AG04449 (cell line): ENCODE measurements at regions of chr11 and their contacts with region 1.

Region 1: DNA sequence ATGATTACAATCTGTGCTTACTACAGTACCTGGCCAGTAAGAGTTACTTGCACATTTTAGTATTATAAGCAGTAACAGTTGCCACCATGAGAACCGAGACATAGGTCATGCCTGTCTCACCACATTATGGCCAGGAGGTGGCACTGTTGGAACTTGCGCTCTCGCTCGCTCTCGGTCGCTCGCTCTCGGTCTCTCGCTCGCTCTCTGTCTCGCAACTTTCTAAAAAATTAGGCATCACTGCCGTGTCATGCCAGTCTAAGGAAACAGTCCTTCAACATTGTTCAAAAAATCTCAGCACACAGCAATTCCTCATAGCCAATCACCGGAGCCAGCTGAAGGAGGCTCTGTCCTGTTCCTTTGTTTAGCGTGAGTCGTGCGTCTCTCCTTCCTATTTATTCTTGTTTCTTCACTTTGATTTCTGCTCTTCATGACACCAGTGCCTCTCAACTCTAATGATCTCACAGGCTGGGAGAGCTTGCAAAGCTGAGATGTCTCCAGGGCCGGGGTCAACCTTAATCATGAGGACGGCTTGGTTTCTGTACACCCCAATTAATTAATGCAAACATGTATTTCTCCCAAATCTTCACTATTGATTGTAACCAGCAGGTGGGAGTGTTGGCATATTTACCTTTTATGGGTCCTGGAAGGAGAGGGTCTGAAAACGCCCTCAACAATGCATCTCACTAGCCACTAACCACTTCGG is 6.3 kb upstream of the ADAMTS8 start:
- DNase-seq: no peak
- H3K4me3 ChIP-seq: peak overlapping the region; percentile 65
- CTCF ChIP-seq: peak; percentile 89

Region 2: GRCh38 chr11:130390071-130390758 is 44.5 kb before region 1 on chr11:
- CTCF ChIA-PET with region 1: interaction called, 10 read pairs
- POLR2A ChIA-PET with region 1: no interaction called
- DNase-seq: no peak
- H3K4me3 ChIP-seq: no peak overlapping the region
- CTCF ChIP-seq: peak; percentile 65

Region 3: GRCh38 chr11:130671801-130672700 is 237.4 kb after region 1 on chr11:
- CTCF ChIA-PET with region 1: interaction called, 26 read pairs
- POLR2A ChIA-PET with region 1: no interaction called
- DNase-seq: peak; percentile 77
- H3K4me3 ChIP-seq: no peak overlapping the region
- CTCF ChIP-seq: no peak

Region 4: GRCh38 chr11:130847517-130847916 is 412.8 kb after region 1 on chr11:
- CTCF ChIA-PET with region 1: interaction called, 56 read pairs
- POLR2A ChIA-PET with region 1: interaction called, 3 read pairs
- DNase-seq: peak; percentile 73
- H3K4me3 ChIP-seq: peak overlapping the region; percentile 23
- CTCF ChIP-seq: no peak

Region 5: GRCh38 chr11:130894322-130895025 is 459.8 kb after region 1 on chr11:
- CTCF ChIA-PET with region 1: interaction called, 428 read pairs
- POLR2A ChIA-PET with region 1: no interaction called
- DNase-seq: no peak
- H3K4me3 ChIP-seq: no peak overlapping the region
- CTCF ChIP-seq: peak; percentile 85

Region 6: GRCh38 chr11:131195661-131196517 is 761.2 kb after region 1 on chr11:
- CTCF ChIA-PET with region 1: no interaction called
- POLR2A ChIA-PET with region 1: no interaction called
- DNase-seq: no peak
- H3K4me3 ChIP-seq: no peak overlapping the region
- CTCF ChIP-seq: no peak